ENCODE measurements at regions of chr12 and their contacts with region 1.

Region 1: DNA sequence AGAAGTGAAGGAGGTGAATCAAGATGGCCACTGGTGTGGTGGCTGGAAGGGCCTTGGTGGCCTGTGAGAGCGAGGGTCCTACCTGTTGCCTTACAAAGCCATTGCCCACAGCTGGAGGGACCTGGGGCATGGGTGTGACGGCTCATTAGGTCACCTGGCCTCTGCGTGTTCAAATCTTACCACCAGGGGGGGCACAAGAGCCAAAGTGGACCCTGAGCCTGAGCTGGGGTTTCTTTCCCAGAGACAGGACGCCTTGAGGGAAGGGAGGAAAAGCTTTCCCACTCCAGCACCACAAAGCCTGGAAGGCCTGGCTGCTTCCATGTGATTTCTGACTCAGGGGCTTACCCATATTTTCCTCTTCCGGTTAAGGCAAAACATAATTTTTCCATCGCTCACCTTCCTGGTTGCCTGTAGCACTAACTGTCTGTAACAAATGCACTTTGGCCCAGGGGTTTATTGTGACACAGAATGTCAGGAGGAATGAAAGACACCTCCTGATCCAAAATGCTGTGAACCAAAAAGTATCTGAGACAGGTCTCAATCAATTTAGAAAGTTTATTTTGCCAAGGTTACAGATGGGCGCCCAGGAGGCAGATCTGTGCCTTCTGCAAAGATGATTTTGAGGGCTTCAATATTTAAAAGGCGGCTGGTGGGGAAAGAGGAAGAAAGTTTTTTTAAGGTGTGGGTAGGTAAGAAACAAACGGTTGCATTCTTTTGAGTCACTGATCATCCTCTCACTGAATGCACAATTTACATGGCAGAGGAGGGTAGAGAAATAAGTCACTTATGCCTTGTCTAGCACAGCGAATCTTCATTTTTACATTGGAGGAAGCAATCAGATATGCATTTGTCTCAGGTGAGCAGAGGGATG is 4.3 kb upstream of the CD9 start:
- DNase-seq: peak; percentile 92
- H3K4me3 Mint-ChIP-seq: no peak overlapping the region
- H3K27ac Mint-ChIP-seq: peak overlapping the region; percentile 61
- H3K4me1 Mint-ChIP-seq: peaks cover 27% of the 10 kb centered on the region
- H3K27me3 Mint-ChIP-seq: peaks cover 12% of the 10 kb centered on the region
- CTCF ChIP-seq: peak; percentile 88

Region 2: DNA sequence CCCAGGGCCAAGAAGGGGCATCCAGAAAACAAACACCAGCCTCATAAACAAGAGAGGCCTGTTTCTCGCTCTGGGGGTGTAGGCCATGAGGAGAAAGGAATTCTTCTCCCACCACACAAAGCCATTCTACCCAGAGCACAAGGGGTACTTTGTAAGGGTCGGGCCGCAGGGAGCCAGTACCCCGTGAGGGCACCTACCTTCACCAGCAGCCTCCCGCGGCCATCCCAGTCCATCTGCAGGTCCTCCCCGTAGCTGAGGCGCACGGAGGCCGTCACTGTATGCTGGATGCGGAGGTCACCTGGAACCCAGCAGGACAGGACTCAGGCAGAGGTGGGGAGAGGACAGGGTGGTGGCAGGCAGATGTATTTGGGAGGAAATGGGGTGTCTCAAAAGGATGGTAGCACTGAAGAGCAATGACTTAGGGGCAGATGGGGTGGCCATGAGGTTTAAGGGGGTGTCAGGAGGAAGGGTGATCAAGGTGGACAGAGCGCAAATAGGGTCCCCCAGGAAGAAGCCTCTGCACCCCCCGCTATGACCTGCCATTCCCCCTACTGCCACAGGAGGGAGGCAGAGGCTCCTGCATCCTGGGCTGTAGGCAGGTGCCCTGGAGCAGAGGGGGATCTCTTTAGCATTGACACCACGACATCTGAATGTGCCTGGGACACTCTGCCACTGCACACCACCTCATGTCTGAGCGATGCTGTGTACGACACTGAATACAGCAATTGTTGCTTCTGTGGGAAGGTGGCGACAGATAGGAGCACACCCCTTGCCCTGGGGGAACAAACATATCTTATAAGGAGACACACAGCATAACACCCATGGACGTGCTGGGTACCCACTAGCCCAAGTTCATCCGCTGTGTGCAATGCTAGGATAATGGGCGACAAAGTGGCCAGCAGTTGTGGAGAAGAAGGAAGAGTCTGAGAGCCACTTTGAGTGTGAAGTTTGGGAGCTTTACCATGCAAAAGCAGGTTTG is 132.9 kb before region 1 on chr12:
- CTCF ChIA-PET with region 1: interaction called, 10 read pairs
- POLR2A ChIA-PET with region 1: interaction called, 3 read pairs
- intact Hi-C with region 1: loop called (anchors 1 kb)
- DNase-seq: peak; percentile 55
- H3K4me3 Mint-ChIP-seq: no peak overlapping the region
- H3K27ac Mint-ChIP-seq: no peak overlapping the region
- H3K4me1 Mint-ChIP-seq: no peaks in the 10 kb centered on the region
- H3K27me3 Mint-ChIP-seq: no peaks in the 10 kb centered on the region
- CTCF ChIP-seq: peak; percentile 98

Region 3: DNA sequence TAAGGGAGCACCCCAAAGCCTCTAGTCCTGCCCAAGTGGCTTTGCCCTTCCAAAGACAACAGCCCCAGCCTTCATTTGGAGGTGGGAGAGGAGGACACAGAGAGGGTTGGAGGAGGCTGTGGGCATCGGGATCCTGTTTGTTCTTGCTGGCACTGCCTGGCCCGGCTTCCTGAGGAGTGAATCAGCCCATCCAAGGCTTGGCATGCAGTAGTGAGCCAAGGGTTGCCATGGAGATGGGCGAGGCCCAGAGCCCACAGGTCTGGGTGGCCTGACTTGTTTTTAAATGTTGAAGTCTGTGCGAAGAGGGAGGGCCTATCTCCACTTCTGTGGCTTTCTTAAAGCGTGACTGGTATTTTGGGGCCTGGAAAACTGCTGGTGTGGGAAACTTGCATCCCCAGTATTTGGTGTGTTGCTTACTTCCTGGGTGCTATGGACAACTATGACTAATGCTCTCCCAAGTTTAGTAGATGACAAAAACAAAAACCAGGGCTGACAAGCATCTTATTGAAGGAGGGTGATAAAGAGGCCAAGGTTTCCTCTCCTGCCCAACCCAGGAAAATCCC is 20.1 kb after region 1 on chr12:
- CTCF ChIA-PET with region 1: interaction called, 73 read pairs
- POLR2A ChIA-PET with region 1: interaction called, 102 read pairs
- intact Hi-C with region 1: loop called (anchors 2 kb)
- DNase-seq: peak; percentile 99
- H3K4me3 Mint-ChIP-seq: peak overlapping the region; percentile 59
- H3K27ac Mint-ChIP-seq: peak overlapping the region; percentile 100
- H3K4me1 Mint-ChIP-seq: peaks cover 44% of the 10 kb centered on the region
- H3K27me3 Mint-ChIP-seq: no peaks in the 10 kb centered on the region
- CTCF ChIP-seq: no peak

Region 4: DNA sequence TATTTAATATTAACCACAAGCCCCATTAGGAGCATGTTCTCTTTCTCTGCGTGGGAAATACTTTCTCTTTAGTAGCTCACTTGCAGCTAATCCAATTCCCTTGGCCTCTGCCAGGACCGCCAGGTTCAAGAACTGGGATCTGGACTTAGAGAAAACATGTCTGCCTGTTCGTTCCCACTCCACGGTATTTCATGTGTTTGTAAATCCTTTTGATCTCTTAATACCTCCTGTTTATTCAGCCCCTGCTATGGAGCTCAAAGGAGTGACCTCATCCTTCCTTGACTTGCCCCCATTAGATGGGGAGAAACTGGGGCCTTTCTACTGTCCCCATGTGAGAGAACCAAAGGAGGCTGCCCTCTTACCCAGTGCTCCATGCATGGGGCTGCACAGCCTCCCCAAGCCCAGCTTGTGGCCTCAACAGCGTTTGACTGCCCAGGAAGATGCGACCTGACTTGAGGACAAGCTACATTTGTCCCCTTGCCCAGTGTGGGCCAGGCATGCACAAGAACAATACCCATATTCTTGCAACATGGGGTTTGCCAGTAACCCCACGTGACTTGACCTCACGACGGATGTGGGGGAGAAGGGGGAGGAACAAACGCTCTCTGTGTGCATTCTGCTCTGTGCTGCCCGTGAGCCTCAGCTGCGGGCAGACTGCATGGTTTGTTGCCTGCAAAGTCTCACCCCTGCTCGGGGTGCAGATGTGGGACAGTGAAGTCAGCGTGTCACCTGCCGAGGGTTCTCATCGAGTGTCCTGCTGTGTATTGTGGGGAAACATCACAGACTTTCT is 34.6 kb after region 1 on chr12:
- CTCF ChIA-PET with region 1: interaction called, 25 read pairs
- POLR2A ChIA-PET with region 1: interaction called, 48 read pairs
- intact Hi-C with region 1: loop called (anchors 5 kb)
- DNase-seq: peak; percentile 65
- H3K4me3 Mint-ChIP-seq: peak overlapping the region; percentile 68
- H3K27ac Mint-ChIP-seq: peak overlapping the region; percentile 98
- H3K4me1 Mint-ChIP-seq: peaks cover 44% of the 10 kb centered on the region
- H3K27me3 Mint-ChIP-seq: no peaks in the 10 kb centered on the region
- CTCF ChIP-seq: no peak

Region 5: GRCh38 chr12:6278439-6279255 is 82.7 kb after region 1 on chr12:
- CTCF ChIA-PET with region 1: interaction called, 369 read pairs
- POLR2A ChIA-PET with region 1: interaction called, 116 read pairs
- intact Hi-C with region 1: loop called (anchors 1 kb)
- DNase-seq: peak; percentile 89
- H3K4me3 Mint-ChIP-seq: peak overlapping the region; percentile 66
- H3K27ac Mint-ChIP-seq: peak overlapping the region; percentile 92
- H3K4me1 Mint-ChIP-seq: peaks cover 44% of the 10 kb centered on the region
- H3K27me3 Mint-ChIP-seq: no peaks in the 10 kb centered on the region
- CTCF ChIP-seq: peak; percentile 94

Measured in MCF 10A (cell line).